IMR-90 (cell line): ENCODE measurements at regions of chr20 and their contacts with region 1.

Region 1: DNA sequence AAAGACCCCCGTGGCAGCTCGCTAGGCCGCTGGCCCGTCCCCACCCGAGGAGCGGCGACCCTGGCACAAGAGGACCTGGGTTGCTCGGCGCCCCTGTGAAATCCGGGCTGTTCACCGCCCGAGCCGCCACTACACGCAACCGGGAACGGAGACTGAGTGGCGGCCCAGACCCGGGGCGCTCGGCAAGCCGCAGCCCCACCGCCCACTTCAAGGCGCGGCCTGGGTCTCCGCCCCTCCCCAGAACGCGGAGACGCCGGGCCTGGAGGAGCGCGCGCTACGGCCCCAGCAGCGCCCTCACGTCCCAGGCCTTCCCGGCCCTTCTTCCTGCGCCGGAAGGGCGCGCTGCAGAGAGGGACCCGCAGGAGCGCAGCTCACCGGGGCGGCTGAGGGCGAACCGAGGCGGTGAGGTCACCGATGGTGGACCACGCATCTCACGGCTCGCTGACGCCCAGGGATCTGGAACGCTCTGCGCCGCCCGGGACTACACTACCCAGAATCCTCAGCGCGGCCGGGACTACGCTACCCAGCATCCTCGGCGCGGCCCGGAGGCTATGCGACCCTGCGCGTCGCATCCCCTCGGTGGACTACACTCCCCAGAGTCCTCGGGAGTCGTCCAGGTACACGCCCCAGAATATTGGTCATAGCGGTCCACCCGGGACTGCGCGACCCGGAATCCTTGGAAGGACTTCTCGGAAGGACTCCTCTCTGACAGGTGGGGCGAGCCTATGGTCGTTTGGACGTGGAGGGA is at the start of gene ZNF337:
- DNase-seq: peak; percentile 91
- ATAC-seq: peak; percentile 99
- H3K4me3 ChIP-seq: peak within 1 kb of the TSS; percentile 61
- H3K27ac ChIP-seq: peak within 1 kb of the TSS; percentile 69
- H3K4me1 ChIP-seq: peaks cover 5% of the 10 kb centered on the region
- H3K27me3 ChIP-seq: no peaks in the 10 kb centered on the region
- CTCF ChIP-seq: peak; percentile 35; the same call in 1 of the 2 replicates
- POLR2A ChIP-seq: peak; percentile 86
- RAD21 ChIP-seq: peak; percentile 32
- total RNA-seq, gene ZNF337: 15.8 and 16.5 TPM in 2 replicates

Region 2: DNA sequence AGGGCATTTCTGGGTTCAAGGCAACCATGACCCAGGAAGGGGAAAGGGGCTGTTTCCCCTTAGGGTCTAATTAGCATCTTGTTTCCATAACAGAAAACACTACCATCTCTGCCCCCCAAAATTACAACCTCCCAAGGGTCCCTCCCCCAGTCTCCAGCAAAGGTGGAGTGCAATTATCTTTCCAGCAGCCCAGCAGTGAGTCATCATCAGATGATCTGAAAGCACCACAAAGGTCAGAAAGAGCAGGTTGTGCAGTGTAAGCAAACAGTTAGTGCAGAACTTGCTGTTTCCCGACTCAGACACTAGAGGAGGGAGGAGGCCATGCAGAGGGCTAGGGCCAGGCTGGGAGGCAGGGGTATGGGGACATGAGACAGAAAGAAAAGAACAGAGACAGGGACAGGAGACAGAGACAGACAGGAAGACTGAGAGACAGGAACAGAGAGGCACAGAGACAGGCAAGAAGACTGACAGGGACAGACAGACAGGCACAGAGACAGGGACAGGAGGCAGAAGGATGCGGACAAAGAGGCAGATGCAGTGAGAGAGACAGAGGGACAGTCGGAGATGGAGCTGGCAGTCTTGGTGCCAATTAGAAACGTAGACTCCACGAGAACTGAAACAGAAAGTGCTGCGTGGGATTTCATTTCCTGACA is 386.2 kb before region 1 on chr20:
- CTCF ChIA-PET with region 1: no interaction called
- POLR2A ChIA-PET with region 1: no interaction called
- dilution Hi-C with region 1: no loop called
- in situ Hi-C with region 1: loop called (anchors 25 kb)
- intact Hi-C with region 1: no loop called
- DNase-seq: peak; percentile 96
- ATAC-seq: peak; percentile 90
- H3K4me3 ChIP-seq: peak overlapping the region; percentile 27; the same call in 1 of the 2 replicates
- H3K27ac ChIP-seq: peak overlapping the region; percentile 94
- H3K4me1 ChIP-seq: peaks cover 28% of the 10 kb centered on the region
- H3K27me3 ChIP-seq: no peaks in the 10 kb centered on the region
- CTCF ChIP-seq: peak; percentile 77
- POLR2A ChIP-seq: peak; percentile 76; the same call in 1 of the 2 replicates
- RAD21 ChIP-seq: peak; percentile 78

Region 3: DNA sequence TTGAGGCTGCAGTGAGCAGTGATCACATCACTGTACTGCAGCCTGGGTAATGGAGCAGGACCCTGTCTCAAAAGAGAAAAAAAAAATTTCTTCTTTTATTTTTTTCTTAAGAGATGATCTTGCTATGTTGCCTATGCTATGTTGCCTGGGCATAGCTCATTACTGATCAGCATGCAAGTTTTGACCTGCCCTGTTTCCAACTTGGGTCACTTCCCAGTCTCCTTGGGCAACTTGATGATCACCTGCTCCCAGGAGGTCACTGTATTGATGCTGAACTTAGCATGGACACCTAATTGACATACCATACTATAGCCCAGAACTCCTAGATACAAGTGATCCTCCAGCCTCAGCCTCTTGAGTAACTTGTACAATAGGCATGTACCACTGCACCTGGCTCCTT is 42.1 kb before region 1 on chr20:
- CTCF ChIA-PET with region 1: no interaction called
- POLR2A ChIA-PET with region 1: no interaction called
- dilution Hi-C with region 1: no loop called
- in situ Hi-C with region 1: no loop called
- intact Hi-C with region 1: no loop called
- DNase-seq: no peak
- ATAC-seq: no peak
- H3K4me3 ChIP-seq: no peak overlapping the region
- H3K27ac ChIP-seq: no peak overlapping the region
- H3K4me1 ChIP-seq: no peaks in the 10 kb centered on the region
- H3K27me3 ChIP-seq: no peaks in the 10 kb centered on the region
- CTCF ChIP-seq: no peak
- POLR2A ChIP-seq: no peak
- RAD21 ChIP-seq: no peak